AG04450 (cell line): ENCODE measurements at regions of chr5 and their contacts with region 1.

Region 1: GRCh38 chr5:108727651-108728565 is 19.8 kb upstream of the FER start:
- DNase-seq: peak; percentile 70
- H3K4me3 ChIP-seq: peak overlapping the region; percentile 81
- H3K27ac ChIP-seq: peak overlapping the region; percentile 92
- H3K27me3 ChIP-seq: no peaks in the 10 kb centered on the region
- CTCF ChIP-seq: no peak

Region 2: GRCh38 chr5:108567429-108567828 is 160.5 kb before region 1 on chr5:
- CTCF ChIA-PET with region 1: no interaction called
- POLR2A ChIA-PET with region 1: no interaction called
- DNase-seq: no peak
- H3K4me3 ChIP-seq: no peak overlapping the region
- H3K27ac ChIP-seq: no peak overlapping the region
- H3K27me3 ChIP-seq: no peaks in the 10 kb centered on the region
- CTCF ChIP-seq: no peak

Region 3: DNA sequence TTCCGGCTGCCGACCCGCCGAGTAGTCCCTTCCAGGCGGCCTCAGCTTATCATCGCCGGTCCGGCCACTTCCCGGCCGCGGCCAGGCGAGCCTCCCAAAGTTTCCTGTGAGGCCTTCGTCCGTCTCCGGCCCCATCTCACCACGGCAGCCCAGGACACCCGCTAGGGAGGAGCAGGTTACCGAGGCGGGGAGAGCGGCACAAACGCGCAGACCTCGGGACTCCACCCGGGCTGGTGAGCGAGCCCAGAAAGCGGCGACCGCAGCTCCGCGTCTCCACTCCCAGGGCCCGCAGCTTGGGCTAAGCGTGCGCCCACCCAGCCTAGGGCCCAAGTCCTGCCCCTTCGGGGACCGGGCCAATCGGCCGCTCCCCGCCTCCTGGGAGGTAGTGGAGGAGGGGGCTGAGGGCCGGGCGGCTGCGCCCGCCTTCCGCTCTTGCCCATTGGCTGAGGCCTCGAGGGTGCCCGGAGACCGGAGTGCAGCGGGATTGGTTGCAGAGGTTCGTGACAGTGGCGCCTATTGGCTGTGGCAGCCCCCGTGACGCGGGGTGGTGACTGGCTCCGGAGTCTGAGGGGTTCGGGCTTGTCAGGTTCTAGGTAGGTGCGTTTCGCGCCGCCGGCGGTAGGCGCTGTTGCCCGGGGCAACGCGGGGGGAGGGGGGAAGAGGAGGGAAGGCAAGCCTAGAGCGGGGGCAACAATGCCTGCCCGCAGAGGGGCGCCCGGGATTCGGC is 20.7 kb after region 1 on chr5:
- CTCF ChIA-PET with region 1: interaction called, 3 read pairs
- POLR2A ChIA-PET with region 1: interaction called, 28 read pairs
- DNase-seq: peak; percentile 98
- H3K4me3 ChIP-seq: peak overlapping the region; percentile 83
- H3K27ac ChIP-seq: peak overlapping the region; percentile 99
- H3K27me3 ChIP-seq: no peaks in the 10 kb centered on the region
- CTCF ChIP-seq: 0 out of 2 replicates have a peak, but pooled peaks have one; percentile 11